Esophagus squamous epithelium (tissue), 5 donors: ENCODE measurements at regions of chr17 and their contacts with region 1.

Region 1: GRCh38 chr17:1516388-1517161 is at the start of gene INPP5K:
- DNase-seq: peak; percentile 79
- H3K4me3 ChIP-seq: peak within 1 kb of the TSS; percentile 79 to 96 (median 94)
- H3K27ac ChIP-seq: peak within 1 kb of the TSS; percentile 94 to 99 (median 98)
- H3K4me1 ChIP-seq: peaks cover 27 to 59% (median 40%) of the 10 kb centered on the region in 3 donors
- H3K27me3 ChIP-seq: no peaks in the 10 kb centered on the region
- CTCF ChIP-seq: peak in 3 of 6 experiments; percentile 18 to 33 (median 26)
- POLR2A ChIP-seq: peak in 3 of 4 donors; percentile 61 to 82 (median 68)
- total RNA-seq, gene INPP5K: 18.4 to 44.3 (median 35.0) TPM

Region 2: GRCh38 chr17:1267471-1267947 is 249.1 kb before region 1 on chr17:
- intact Hi-C with region 1: loop called (anchors 10 kb)
- DNase-seq: no peak
- H3K4me3 ChIP-seq: peak overlapping the region; percentile 63 to 73 (median 72)
- H3K27ac ChIP-seq: peak overlapping the region; percentile 84 to 94 (median 90)
- H3K4me1 ChIP-seq: peaks cover 0 to 35% (median 10%) of the 10 kb centered on the region in 3 donors
- H3K27me3 ChIP-seq: peaks cover 0 to 36% (median 0%) of the 10 kb centered on the region in 4 donors
- CTCF ChIP-seq: no peak
- POLR2A ChIP-seq: no peak

Region 3: DNA sequence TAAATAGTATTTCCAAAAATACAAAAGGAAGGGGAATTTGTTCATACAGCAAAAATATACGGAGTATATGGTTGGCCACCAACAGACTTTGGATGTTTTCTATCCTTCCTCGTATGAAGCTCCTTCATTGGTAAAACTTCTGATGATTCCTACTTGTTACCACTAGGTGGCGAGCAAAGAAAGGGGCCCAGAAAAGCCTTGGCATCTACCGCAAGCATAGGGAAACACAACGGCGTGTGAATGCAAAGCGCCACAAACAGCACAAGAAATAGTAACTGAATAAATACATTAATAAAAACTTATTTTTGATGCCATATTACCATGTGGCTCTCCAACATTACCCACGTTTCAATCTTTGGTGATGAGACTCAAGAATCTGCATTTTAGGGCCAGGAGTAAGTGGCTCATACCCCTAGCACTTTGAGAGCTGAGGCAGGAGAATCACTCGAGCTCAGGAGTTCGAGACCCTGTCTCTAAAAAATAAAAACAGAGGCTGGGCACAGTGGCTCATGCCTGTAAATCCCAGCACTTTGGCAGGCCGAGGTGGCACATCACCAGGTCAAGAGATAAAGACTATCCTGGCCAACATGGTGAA is 151.0 kb before region 1 on chr17:
- intact Hi-C with region 1: loop called (anchors 10 kb)
- DNase-seq: no peak
- H3K4me3 ChIP-seq: no peak overlapping the region
- H3K27ac ChIP-seq: peak overlapping the region in 1 of 4 donors; percentile 64
- H3K4me1 ChIP-seq: peaks cover 19 to 98% (median 42%) of the 10 kb centered on the region in 3 donors
- H3K27me3 ChIP-seq: no peaks in the 10 kb centered on the region
- CTCF ChIP-seq: peak; percentile 74 to 90 (median 86)
- POLR2A ChIP-seq: no peak

Region 4: DNA sequence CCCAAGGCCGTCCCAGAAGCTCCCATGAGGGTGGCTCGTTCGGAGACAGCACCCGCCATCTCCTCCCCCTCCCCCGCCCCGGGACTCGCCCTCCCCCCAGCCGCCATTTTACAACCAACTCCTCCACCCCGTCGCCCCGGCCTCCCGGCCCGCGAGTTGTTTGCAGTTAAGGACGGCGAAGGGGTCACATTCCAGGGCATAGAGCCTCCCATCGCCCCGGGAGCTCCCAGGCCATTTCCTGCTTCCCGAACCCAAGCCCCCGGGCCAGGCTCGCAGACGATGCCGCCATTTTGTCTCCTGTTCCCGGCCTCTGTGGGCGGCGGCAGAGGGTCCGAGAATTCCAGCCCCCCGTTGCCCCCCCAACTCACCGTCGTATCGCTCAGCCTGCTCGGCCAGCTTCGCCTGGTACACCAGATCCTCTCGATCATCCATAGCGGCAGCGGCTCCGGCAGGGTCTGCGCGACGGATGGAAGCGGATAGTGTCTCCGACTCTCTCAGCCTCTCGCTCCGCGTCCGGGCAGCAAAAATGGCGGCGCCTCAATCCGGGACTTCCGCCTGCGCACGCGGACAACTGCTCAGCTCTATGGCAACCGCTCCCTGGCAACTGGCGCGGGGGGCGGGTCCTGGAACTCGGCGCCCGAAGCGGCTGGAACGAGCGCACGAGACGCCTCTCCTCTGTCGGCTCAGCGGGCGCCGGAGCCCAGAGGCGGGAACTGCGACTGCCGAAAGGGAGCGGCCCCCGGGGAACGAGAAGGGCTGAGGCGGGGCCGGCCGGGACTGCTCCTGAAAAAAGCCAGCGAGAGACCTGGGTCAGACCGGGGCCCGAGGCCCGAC is 116.7 kb before region 1 on chr17 and contains the start of gene YWHAE:
- intact Hi-C with region 1: no loop called
- DNase-seq: peak; percentile 84
- H3K4me3 ChIP-seq: peak within 1 kb of the TSS; percentile 82 to 95 (median 83)
- H3K27ac ChIP-seq: peak within 1 kb of the TSS; percentile 91 to 98 (median 96)
- H3K4me1 ChIP-seq: peaks cover 23 to 46% (median 30%) of the 10 kb centered on the region in 3 donors
- H3K27me3 ChIP-seq: no peaks in the 10 kb centered on the region
- CTCF ChIP-seq: peak in 1 of 6 experiments; percentile 3
- POLR2A ChIP-seq: peak in 3 of 4 donors; percentile 40 to 91 (median 73)
- total RNA-seq, gene YWHAE: 505 to 758 (median 567) TPM

Region 5: DNA sequence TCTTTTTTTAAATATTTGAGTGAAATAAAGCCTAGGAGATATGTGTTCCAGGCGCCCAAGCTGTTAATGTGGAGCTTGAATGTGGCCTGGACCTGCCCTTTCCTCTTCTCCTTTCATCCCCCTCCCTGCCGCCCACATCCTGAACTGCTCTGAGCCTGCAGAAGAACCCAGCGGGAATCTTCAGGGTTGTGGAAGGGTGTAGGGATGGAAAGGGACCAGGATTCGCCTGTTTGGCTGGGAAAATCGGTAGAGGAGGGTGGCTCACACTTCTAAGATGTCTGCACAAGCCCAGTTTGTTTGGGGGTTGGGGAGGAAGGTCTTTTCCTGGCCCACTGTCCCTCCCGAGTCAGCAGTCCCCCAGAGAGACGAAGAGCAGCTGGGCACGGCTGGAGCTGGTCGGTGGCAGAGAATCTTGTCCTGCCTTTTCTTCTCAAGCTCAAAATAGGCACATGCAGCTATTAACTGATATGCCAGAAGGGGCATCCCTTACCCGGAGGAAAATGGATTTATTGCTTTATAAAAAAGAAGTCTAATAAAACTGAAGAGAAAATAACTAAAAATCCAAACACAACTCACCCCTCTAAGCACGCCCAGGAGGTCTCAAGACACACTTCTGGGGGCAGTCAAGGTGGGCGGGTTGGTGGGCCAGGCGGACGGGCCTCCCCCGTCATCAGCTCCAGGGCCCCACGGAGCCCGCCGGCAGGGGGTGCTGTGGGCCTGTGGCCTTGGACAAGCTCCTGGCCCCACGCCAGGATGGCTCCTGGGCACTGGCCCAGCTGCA is 57.5 kb after region 1 on chr17:
- intact Hi-C with region 1: no loop called
- DNase-seq: no peak
- H3K4me3 ChIP-seq: peak overlapping the region in 1 of 4 donors; percentile 33
- H3K27ac ChIP-seq: peak overlapping the region in 3 of 4 donors; percentile 55 to 81 (median 60)
- H3K4me1 ChIP-seq: peaks cover 32 to 54% (median 40%) of the 10 kb centered on the region in 3 donors
- H3K27me3 ChIP-seq: no peaks in the 10 kb centered on the region
- CTCF ChIP-seq: peak; percentile 87 to 98 (median 96)
- POLR2A ChIP-seq: no peak